ENCODE measurements at regions of chr22 and their contacts with region 1.

Region 1: DNA sequence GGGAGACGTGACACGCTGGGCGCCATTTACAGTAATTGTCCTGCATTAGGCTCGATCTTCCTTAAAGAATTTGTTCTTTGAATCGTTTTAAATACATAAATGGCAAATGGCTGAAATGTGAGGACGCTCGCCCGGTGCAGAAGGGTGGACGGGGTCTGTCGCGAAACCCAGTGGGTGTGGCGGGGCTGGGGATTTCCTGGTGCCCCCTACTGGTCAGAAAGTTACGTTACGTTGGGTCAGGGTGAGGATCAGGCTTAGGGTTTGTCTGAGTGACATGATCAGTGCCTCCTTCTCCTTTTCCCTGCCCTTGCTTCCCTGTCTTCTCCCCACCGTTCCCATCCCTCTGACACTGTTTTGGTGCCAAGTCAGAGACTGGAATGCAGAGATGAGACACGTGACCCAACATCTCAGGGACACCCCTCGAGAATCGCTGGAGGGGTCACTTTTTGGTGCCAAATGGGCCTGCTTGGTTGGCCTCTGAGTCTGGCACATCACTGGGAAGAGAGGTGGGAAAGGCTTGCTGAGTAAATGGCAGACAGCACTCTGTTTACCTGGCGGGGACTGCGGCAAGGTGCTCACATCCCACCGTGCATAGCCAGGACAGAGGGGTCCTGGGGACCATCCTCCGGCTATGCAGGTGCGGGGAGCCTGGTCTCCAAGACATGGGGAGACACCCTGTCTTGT is 1107.6 kb downstream of the BRD1 start:
- DNase-seq: no peak
- H3K4me3 ChIP-seq: no peak overlapping the region
- H3K27ac ChIP-seq: no peak overlapping the region
- H3K4me1 ChIP-seq: no peaks in the 10 kb centered on the region
- H3K27me3 ChIP-seq: peaks cover 0 to 28% (median 0%) of the 10 kb centered on the region in 3 donors
- CTCF ChIP-seq: no peak
- EP300 ChIP-seq: no peak
- POLR2A ChIP-seq: no peak

Region 2: DNA sequence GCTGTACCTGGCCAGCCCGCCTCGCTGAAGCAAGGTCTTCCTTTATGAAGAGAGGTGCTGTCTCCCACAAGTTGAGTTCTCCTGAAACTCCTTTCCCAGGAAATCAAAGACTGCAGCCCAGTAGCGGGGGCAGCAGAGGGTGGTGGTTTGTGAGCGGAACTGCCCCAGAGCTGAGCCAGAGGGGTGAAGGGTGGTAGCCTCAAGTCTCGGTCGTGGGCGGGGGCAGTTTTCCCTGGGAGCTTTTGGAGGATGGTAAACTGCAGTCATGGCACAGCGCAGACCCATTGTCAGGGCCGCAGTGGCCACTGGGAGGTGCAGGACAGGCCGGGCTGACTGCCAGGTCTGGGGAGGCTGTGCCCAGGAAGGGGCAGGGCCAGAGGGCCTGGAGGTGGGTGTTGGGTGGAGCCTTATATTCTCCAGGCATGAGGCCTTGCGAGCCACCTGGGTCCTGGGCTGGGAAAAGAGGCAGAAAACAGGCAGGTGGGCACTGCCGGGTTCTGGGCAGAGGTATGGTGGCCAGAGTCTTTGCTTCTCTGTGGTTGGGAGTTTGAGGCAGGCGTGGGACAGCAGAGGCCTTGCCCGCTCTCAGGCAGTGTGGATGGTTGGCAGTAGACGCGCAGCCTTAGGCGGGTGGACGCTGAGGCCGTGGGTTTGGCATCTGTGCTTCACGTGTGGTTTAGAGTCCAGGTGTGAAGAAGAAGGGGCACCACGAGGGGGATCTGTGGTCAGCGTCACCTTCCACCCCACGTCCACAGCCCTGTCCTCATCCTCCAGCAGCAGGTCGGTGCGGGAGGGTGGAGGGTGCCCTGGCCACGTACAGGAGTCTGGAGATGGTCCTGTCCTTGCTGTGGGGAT is 68.9 kb before region 1 on chr22:
- intact Hi-C with region 1: loop called (anchors 10 kb)
- DNase-seq: no peak
- H3K4me3 ChIP-seq: no peak overlapping the region
- H3K27ac ChIP-seq: no peak overlapping the region
- H3K4me1 ChIP-seq: no peaks in the 10 kb centered on the region
- H3K27me3 ChIP-seq: peaks cover 0 to 4% (median 0%) of the 10 kb centered on the region in 3 donors
- CTCF ChIP-seq: no peak
- EP300 ChIP-seq: no peak
- POLR2A ChIP-seq: no peak

Region 3: GRCh38 chr22:48943567-48944432 is 223.7 kb after region 1 on chr22:
- intact Hi-C with region 1: no loop called
- DNase-seq: peak; percentile 24 to 68
- H3K4me3 ChIP-seq: no peak overlapping the region
- H3K27ac ChIP-seq: no peak overlapping the region
- H3K4me1 ChIP-seq: no peaks in the 10 kb centered on the region
- H3K27me3 ChIP-seq: peaks cover 0 to 34% (median 0%) of the 10 kb centered on the region in 3 donors
- CTCF ChIP-seq: no peak
- EP300 ChIP-seq: no peak
- POLR2A ChIP-seq: no peak